ENCODE measurements at regions of chr1 and their contacts with region 1.

Region 1: DNA sequence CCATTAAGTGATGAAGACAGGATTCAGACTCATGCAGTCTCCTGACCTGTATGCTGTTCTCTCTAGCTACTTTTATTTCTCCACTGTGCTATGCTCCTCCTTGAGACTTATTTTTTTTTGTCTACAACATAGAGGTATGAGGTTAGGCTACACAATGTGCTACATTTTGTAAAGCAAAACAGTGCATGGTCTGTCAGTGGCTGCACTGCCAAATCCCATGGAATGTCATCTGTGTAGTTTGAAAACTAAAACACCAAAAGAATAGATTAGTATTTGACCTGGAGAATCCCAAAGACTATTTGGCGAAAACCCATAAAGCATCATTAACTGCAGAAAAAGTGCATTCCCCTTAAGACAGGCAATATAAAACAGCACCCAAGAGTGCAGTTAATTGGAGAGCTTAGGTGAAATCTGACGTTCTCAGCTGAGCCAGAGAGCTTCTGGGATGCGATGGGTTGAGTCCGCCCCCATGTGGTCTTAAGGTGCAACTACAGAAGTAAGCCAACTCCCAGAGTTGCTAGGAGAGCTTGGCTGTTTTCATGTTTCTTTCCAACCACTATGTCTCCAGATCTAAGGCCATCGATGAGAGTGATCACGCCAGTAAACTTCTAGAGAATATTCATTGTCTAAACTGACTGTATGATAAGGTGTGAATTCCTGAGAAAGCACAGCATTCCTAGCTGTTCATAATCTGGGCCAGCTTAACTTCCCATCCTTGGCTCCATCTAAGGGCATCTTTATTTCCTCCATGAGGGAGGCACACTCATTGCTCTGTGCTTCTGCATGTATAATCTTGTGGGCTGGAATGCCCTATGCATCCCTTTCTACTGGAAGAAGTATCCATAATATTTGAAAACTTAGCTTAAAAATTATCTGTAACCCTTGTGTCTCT is 20.7 kb upstream of the CYP2J2 start:
- DNase-seq: peak; percentile 86
- H3K4me3 ChIP-seq: no peak overlapping the region
- H3K27ac ChIP-seq: no peak overlapping the region
- H3K4me1 ChIP-seq: peaks cover 5% of the 10 kb centered on the region
- H3K27me3 ChIP-seq: no peaks in the 10 kb centered on the region
- CTCF ChIP-seq: peak; percentile 95

Region 2: GRCh38 chr1:58739856-58740466 is 1207.3 kb before region 1 on chr1:
- CTCF ChIA-PET with region 1: no interaction called
- POLR2A ChIA-PET with region 1: no interaction called
- intact Hi-C with region 1: loop called (anchors 10 kb)
- DNase-seq: peak; percentile 82
- H3K4me3 ChIP-seq: no peak overlapping the region
- H3K27ac ChIP-seq: no peak overlapping the region
- H3K4me1 ChIP-seq: peaks cover 4% of the 10 kb centered on the region
- H3K27me3 ChIP-seq: no peaks in the 10 kb centered on the region
- CTCF ChIP-seq: peak; percentile 89

Region 3: DNA sequence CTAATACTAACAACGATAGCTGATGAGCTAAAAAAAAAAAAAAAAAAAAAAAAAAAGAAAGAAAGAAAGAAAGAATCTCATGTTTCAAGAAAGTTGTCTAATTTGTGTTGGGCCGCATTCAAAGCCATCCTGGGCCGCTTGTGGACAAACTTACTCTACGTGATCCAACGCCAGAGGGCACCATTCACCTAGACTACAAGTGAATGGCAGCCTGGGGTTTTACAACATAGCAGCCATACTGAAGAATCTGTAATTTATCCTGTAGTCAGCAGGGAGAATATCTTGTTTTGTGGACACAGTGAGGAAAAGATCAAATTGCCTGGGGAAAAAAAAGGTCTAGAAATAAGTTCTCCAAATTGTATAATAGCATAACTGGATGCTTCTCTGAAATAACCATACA is 67.7 kb before region 1 on chr1:
- CTCF ChIA-PET with region 1: interaction called, 48 read pairs
- POLR2A ChIA-PET with region 1: no interaction called
- intact Hi-C with region 1: loop called (anchors 1 kb)
- DNase-seq: peak; percentile 92
- H3K4me3 ChIP-seq: no peak overlapping the region
- H3K27ac ChIP-seq: peak overlapping the region; percentile 43
- H3K4me1 ChIP-seq: peaks cover 18% of the 10 kb centered on the region
- H3K27me3 ChIP-seq: no peaks in the 10 kb centered on the region
- CTCF ChIP-seq: peak; percentile 80

Region 4: GRCh38 chr1:59903141-59903754 is 44.0 kb before region 1 on chr1:
- CTCF ChIA-PET with region 1: interaction called, 10 read pairs
- POLR2A ChIA-PET with region 1: no interaction called
- intact Hi-C with region 1: loop called (anchors 2 kb)
- DNase-seq: peak; percentile 61
- H3K4me3 ChIP-seq: no peak overlapping the region
- H3K27ac ChIP-seq: no peak overlapping the region
- H3K4me1 ChIP-seq: no peaks in the 10 kb centered on the region
- H3K27me3 ChIP-seq: no peaks in the 10 kb centered on the region
- CTCF ChIP-seq: peak; percentile 73

Region 5: GRCh38 chr1:60281360-60281932 is 334.2 kb after region 1 on chr1:
- CTCF ChIA-PET with region 1: no interaction called
- POLR2A ChIA-PET with region 1: no interaction called
- intact Hi-C with region 1: no loop called
- DNase-seq: peak; percentile 90
- H3K4me3 ChIP-seq: no peak overlapping the region
- H3K27ac ChIP-seq: no peak overlapping the region
- H3K4me1 ChIP-seq: no peaks in the 10 kb centered on the region
- H3K27me3 ChIP-seq: no peaks in the 10 kb centered on the region
- CTCF ChIP-seq: peak; percentile 95

Measured in A673 (cell line).